HepG2 (cell line): ENCODE measurements at regions of chr7 and their contacts with region 1.

Region 1: GRCh38 chr7:134605973-134606923 is 40.4 kb upstream of the BPGM start:
- DNase-seq: peak; percentile 31
- ATAC-seq: peak; percentile 80
- H3K4me3 ChIP-seq: no peak overlapping the region
- H3K27ac ChIP-seq: no peak overlapping the region
- H3K4me1 ChIP-seq: peaks cover 29% of the 10 kb centered on the region
- H3K27me3 ChIP-seq: no peaks in the 10 kb centered on the region; a peak in 1 of 5 replicates
- CTCF ChIP-seq: peak; percentile 82
- EP300 ChIP-seq: no peak
- POLR2A ChIP-seq: no peak
- RAD21 ChIP-seq: peak; percentile 64; the same call in 1 of the 2 replicates

Region 2: GRCh38 chr7:133853706-133854276 is 752.5 kb before region 1 on chr7:
- CTCF ChIA-PET with region 1: no interaction called
- POLR2A ChIA-PET with region 1: no interaction called
- in situ Hi-C with region 1: no loop called
- intact Hi-C with region 1: no loop called
- DNase-seq: peak; percentile 47
- ATAC-seq: peak; percentile 98
- H3K4me3 ChIP-seq: no peak overlapping the region
- H3K27ac ChIP-seq: no peak overlapping the region
- H3K4me1 ChIP-seq: 0 out of 2 replicates have a peak, but pooled peaks cover 7% of the 10 kb centered on the region
- H3K27me3 ChIP-seq: no peaks in the 10 kb centered on the region
- CTCF ChIP-seq: peak; percentile 54
- EP300 ChIP-seq: no peak
- POLR2A ChIP-seq: no peak
- RAD21 ChIP-seq: no peak

Region 3: DNA sequence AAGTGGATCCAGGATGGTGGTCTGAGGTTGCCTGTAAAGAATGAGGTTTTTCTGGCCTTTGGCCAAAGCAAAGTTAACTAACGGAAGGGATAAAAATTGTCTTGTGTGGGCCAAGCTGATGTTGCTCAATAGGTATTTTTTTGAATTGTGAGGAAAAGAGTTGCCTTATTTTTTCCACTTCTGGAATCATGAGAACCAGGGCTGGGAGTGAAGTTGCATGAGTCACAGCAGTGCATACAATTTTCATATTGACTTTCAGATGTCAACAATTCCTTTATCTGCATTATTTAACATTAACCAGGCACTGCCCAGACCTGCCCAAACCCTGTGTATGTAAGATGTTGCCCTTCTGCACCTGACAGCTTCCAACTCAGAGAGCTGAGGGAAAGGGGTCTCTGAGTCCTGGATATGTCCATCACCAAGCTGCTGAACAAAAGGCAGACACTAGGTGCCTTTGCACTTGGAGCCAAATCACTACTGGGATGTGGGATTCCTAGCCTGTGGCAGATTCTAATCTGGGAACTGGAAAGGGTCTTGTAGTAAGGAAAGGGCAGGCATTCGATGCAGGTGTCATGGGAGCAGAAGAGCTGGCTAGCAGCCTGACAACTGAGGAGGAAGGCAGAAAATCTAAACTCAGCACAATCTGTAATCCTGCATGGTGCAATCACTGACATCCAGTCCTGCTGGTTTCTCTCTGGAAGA is 237.2 kb before region 1 on chr7:
- CTCF ChIA-PET with region 1: no interaction called
- POLR2A ChIA-PET with region 1: no interaction called
- in situ Hi-C with region 1: no loop called
- intact Hi-C with region 1: loop called (anchors 5 kb)
- DNase-seq: peak; percentile 87
- ATAC-seq: peak; percentile 80
- H3K4me3 ChIP-seq: no peak overlapping the region
- H3K27ac ChIP-seq: peak overlapping the region; percentile 41
- H3K4me1 ChIP-seq: peaks cover 65% of the 10 kb centered on the region
- H3K27me3 ChIP-seq: no peaks in the 10 kb centered on the region; a peak in 1 of 5 replicates
- CTCF ChIP-seq: no peak
- EP300 ChIP-seq: peak in 1 of 2 experiments; percentile 77; a peak in 2 of 4 replicates
- POLR2A ChIP-seq: no peak
- RAD21 ChIP-seq: no peak

Region 4: GRCh38 chr7:134432296-134433152 is 173.7 kb before region 1 on chr7:
- CTCF ChIA-PET with region 1: interaction called, 14 read pairs
- POLR2A ChIA-PET with region 1: interaction called, 4 read pairs
- in situ Hi-C with region 1: loop called (anchors 5 kb)
- intact Hi-C with region 1: loop called (anchors 1 kb)
- DNase-seq: peak; percentile 87
- ATAC-seq: peak; percentile 96
- H3K4me3 ChIP-seq: peak overlapping the region; percentile 47 to 71 (median 54)
- H3K27ac ChIP-seq: no peak overlapping the region
- H3K4me1 ChIP-seq: peaks cover 19% of the 10 kb centered on the region
- H3K27me3 ChIP-seq: no peaks in the 10 kb centered on the region
- CTCF ChIP-seq: peak; percentile 95
- EP300 ChIP-seq: no peak
- POLR2A ChIP-seq: no peak
- RAD21 ChIP-seq: peak; percentile 84

Region 5: GRCh38 chr7:134514663-134515062 is 91.6 kb before region 1 on chr7:
- CTCF ChIA-PET with region 1: interaction called, 27 read pairs
- POLR2A ChIA-PET with region 1: no interaction called
- in situ Hi-C with region 1: loop called (anchors 5 kb)
- intact Hi-C with region 1: loop called (anchors 1 kb)
- DNase-seq: peak; percentile 66
- ATAC-seq: peak; percentile 73
- H3K4me3 ChIP-seq: no peak overlapping the region
- H3K27ac ChIP-seq: no peak overlapping the region
- H3K4me1 ChIP-seq: no peaks in the 10 kb centered on the region
- H3K27me3 ChIP-seq: peaks cover 2 to 5% of the 10 kb centered on the region in 2 experiments; a peak in 3 of 5 replicates
- CTCF ChIP-seq: peak; percentile 72
- EP300 ChIP-seq: no peak
- POLR2A ChIP-seq: no peak
- RAD21 ChIP-seq: no peak

Region 6: GRCh38 chr7:134520130-134520529 is 86.1 kb before region 1 on chr7:
- CTCF ChIA-PET with region 1: interaction called, 27 read pairs
- POLR2A ChIA-PET with region 1: no interaction called
- in situ Hi-C with region 1: no loop called
- intact Hi-C with region 1: no loop called
- DNase-seq: no peak
- ATAC-seq: peak; percentile 40; the same call in 1 of the 3 replicates
- H3K4me3 ChIP-seq: no peak overlapping the region; a peak in 1 of 6 replicates
- H3K27ac ChIP-seq: no peak overlapping the region
- H3K4me1 ChIP-seq: no peaks in the 10 kb centered on the region
- H3K27me3 ChIP-seq: peaks cover 0 to 5% of the 10 kb centered on the region in 2 experiments; a peak in 2 of 5 replicates
- CTCF ChIP-seq: no peak
- EP300 ChIP-seq: no peak
- POLR2A ChIP-seq: no peak
- RAD21 ChIP-seq: no peak

Region 7: GRCh38 chr7:134547397-134548054 is 58.7 kb before region 1 on chr7:
- CTCF ChIA-PET with region 1: interaction called, 8 read pairs
- POLR2A ChIA-PET with region 1: no interaction called
- in situ Hi-C with region 1: no loop called
- intact Hi-C with region 1: loop called (anchors 1 kb)
- DNase-seq: peak; percentile 50
- ATAC-seq: peak; percentile 90
- H3K4me3 ChIP-seq: peak overlapping the region; percentile 39 to 63 (median 44); a peak in 5 of 6 replicates
- H3K27ac ChIP-seq: no peak overlapping the region
- H3K4me1 ChIP-seq: peaks cover 21% of the 10 kb centered on the region
- H3K27me3 ChIP-seq: peaks cover 0 to 38% of the 10 kb centered on the region in 2 experiments; a peak in 3 of 5 replicates
- CTCF ChIP-seq: peak; percentile 79
- EP300 ChIP-seq: no peak
- POLR2A ChIP-seq: no peak
- RAD21 ChIP-seq: peak; percentile 50; the same call in 1 of the 2 replicates

Region 8: DNA sequence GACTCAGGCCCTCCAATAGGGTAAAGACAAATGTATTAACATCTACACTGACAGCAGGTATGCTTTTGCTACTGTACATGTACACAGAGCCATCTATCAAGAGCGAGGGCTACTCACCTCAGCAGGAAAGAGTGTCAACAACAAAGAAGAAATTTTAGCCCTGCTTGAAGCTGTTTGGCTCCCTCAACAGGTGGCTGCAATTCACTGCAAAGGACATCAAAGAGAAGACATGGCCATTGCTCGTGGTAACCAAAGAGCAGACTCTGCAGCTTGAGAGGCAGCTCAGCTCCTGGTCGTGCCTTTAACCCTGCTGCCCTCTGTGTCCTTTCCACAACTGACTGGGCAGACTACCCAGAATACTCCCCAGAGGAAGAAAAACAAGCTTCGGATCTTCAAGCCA is 52.3 kb before region 1 on chr7:
- CTCF ChIA-PET with region 1: no interaction called
- POLR2A ChIA-PET with region 1: no interaction called
- in situ Hi-C with region 1: no loop called
- intact Hi-C with region 1: loop called (anchors 1 kb)
- DNase-seq: peak; percentile 37
- ATAC-seq: peak; percentile 75
- H3K4me3 ChIP-seq: no peak overlapping the region
- H3K27ac ChIP-seq: no peak overlapping the region
- H3K4me1 ChIP-seq: peaks cover 13% of the 10 kb centered on the region
- H3K27me3 ChIP-seq: peaks cover 4 to 66% of the 10 kb centered on the region in 2 experiments; a peak in 4 of 5 replicates
- CTCF ChIP-seq: peak; percentile 67
- EP300 ChIP-seq: no peak
- POLR2A ChIP-seq: no peak
- RAD21 ChIP-seq: no peak

Region 9: DNA sequence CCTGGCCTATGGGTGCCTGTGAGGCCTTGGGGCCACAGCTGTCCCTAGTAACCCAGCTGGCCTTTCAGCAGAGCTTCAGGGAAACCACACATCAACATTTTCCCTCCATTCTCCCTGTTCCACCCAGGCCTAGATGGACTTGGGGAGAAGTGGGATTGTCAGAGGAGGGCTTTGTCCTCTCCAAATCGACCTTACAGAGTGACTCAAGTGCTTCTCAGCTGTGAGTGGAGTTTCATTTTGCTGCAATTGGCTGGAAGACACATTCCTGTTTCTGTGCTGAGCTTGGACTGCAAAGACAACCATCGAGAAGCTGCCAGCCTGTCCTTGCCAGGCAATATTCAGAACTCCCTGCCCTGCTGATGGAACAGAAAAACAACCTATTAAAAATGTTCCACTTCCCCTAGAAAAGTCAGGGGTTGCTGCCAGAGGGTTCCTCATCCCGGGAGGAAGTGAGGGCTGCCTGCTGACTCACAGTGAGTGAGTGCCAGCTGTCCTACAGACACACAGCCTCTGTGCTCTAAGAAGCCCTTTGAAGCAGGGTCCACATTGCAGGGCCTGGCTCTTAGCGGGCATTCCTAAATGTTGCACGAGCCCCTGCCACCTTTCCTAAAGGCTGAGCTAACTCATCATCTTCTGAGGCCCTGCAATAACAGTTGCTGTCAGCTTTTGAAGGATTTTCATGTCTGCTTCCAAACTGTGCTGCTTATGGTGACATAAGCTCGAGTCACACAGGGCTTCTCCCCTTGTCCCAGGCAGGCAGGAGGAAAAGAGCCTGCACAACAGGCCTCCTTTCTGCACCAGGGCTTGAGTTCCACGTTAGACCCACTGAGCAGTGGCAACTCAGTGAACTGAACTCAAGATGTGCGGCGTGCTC is 647.9 kb after region 1 on chr7:
- CTCF ChIA-PET with region 1: no interaction called
- POLR2A ChIA-PET with region 1: no interaction called
- in situ Hi-C with region 1: no loop called
- intact Hi-C with region 1: no loop called
- DNase-seq: peak; percentile 50
- ATAC-seq: peak; percentile 76
- H3K4me3 ChIP-seq: peak overlapping the region in 2 of 3 experiments; percentile 35 to 51; a peak in 4 of 6 replicates
- H3K27ac ChIP-seq: no peak overlapping the region
- H3K4me1 ChIP-seq: peaks cover 60% of the 10 kb centered on the region
- H3K27me3 ChIP-seq: no peaks in the 10 kb centered on the region; a peak in 1 of 5 replicates
- CTCF ChIP-seq: no peak
- EP300 ChIP-seq: 0 out of 4 replicates have a peak, but pooled peaks of 1 of the 2 experiments have one; percentile 8
- POLR2A ChIP-seq: no peak
- RAD21 ChIP-seq: no peak